ENCODE measurements at regions of chr2 and their contacts with region 1.

Region 1: GRCh38 chr2:49291619-49292018 is 137.3 kb upstream of the FSHR start:
- DNase-seq: no peak
- H3K4me3 ChIP-seq: no peak overlapping the region
- H3K4me3 Mint-ChIP-seq: no peak overlapping the region
- H3K27ac Mint-ChIP-seq: no peak overlapping the region
- H3K4me1 ChIP-seq: no peaks in the 10 kb centered on the region
- H3K4me1 Mint-ChIP-seq: no peaks in the 10 kb centered on the region
- H3K27me3 ChIP-seq: no peaks in the 10 kb centered on the region
- H3K27me3 Mint-ChIP-seq: peaks cover 3% of the 10 kb centered on the region
- CTCF ChIP-seq: no peak

Region 2: GRCh38 chr2:49111456-49111855 is 180.2 kb before region 1 on chr2:
- CTCF ChIA-PET with region 1: no interaction called
- POLR2A ChIA-PET with region 1: no interaction called
- intact Hi-C with region 1: no loop called
- DNase-seq: no peak
- H3K4me3 ChIP-seq: no peak overlapping the region
- H3K4me3 Mint-ChIP-seq: no peak overlapping the region
- H3K27ac Mint-ChIP-seq: no peak overlapping the region
- H3K4me1 ChIP-seq: no peaks in the 10 kb centered on the region
- H3K4me1 Mint-ChIP-seq: peaks cover 7% of the 10 kb centered on the region
- H3K27me3 ChIP-seq: no peaks in the 10 kb centered on the region
- H3K27me3 Mint-ChIP-seq: peaks cover 10% of the 10 kb centered on the region
- CTCF ChIP-seq: no peak

Region 3: DNA sequence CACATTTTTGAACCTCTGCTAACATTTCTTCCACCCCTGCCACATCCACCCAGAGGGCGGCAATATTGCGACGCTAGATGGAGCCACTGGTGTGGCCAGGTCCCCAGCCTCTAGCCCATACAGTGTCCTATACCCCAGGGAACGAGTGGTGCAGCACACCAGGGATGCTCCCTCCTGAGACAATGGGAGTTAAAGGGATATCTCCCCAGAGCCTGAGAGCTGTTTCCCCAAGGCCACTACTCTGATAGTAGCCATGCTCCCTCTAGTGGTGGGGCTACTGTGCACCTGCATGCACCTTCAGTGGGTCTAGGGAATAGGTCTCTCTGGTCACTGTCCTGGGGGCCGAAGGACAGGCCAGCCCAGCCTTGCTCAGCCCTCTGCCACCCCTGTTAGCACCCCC is 199.1 kb after region 1 on chr2:
- CTCF ChIA-PET with region 1: no interaction called
- POLR2A ChIA-PET with region 1: no interaction called
- intact Hi-C with region 1: loop called (anchors 2 kb)
- DNase-seq: peak; percentile 61 to 64
- H3K4me3 ChIP-seq: no peak overlapping the region
- H3K4me3 Mint-ChIP-seq: no peak overlapping the region
- H3K27ac Mint-ChIP-seq: no peak overlapping the region
- H3K4me1 ChIP-seq: no peaks in the 10 kb centered on the region
- H3K4me1 Mint-ChIP-seq: no peaks in the 10 kb centered on the region
- H3K27me3 ChIP-seq: no peaks in the 10 kb centered on the region
- H3K27me3 Mint-ChIP-seq: no peaks in the 10 kb centered on the region
- CTCF ChIP-seq: peak; percentile 62 to 69

Measured in Caco-2 (cell line).